ENCODE measurements at regions of chr7 and their contacts with region 1.

Region 1: GRCh38 chr7:38908759-38909335 is at the start of gene VPS41:
- DNase-seq: peak; percentile 58 to 83
- ATAC-seq: peak; percentile 84 to 98 (median 97)
- H3K4me3 ChIP-seq: peak within 1 kb of the TSS; percentile 75 to 96 (median 85)
- H3K27ac ChIP-seq: peak within 1 kb of the TSS in 5 of 10 donors; percentile 29 to 86 (median 47)
- H3K4me1 ChIP-seq: peaks cover 0 to 19% (median 9%) of the 10 kb centered on the region in 9 donors
- H3K27me3 ChIP-seq: no peaks in the 10 kb centered on the region
- CTCF ChIP-seq: no peak
- total RNA-seq, gene VPS41: 27.4 to 60.7 (median 50.5) TPM

Region 2: GRCh38 chr7:38806912-38807311 is 101.9 kb before region 1 on chr7:
- intact Hi-C with region 1: loop called in 2 of 10 experiments (anchors 5 to 10 kb)
- DNase-seq: no peak
- ATAC-seq: no peak
- H3K4me3 ChIP-seq: no peak overlapping the region
- H3K27ac ChIP-seq: no peak overlapping the region
- H3K4me1 ChIP-seq: no peaks in the 10 kb centered on the region
- H3K27me3 ChIP-seq: no peaks in the 10 kb centered on the region
- CTCF ChIP-seq: no peak

Region 3: DNA sequence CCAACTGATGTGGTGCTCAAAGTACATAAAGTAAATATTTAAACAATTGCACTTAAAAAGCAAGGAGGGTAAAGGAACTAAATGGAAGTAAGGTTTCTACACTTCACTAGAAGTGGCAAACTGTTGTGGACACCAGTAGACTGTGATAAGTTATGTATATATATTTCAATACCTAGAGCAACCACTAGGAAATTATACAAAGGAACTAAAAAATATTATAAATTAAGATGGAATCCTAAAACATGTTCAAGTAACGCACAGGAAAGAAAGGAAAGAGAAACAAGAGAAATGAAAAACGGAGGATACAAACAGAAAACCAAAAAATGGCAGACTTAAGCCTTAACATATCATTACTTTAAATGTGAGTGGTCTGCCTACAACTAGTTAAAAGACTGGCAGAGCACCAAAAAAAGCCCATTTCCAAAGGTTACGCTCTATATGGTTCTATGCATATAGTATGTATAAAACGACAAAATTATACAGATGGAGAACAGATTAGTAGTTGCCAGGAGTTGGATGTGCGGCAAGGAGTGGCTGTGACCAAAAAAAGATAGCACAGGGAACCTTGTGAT is 18.9 kb before region 1 on chr7:
- intact Hi-C with region 1: no loop called
- DNase-seq: no peak
- ATAC-seq: no peak
- H3K4me3 ChIP-seq: no peak overlapping the region
- H3K27ac ChIP-seq: no peak overlapping the region
- H3K4me1 ChIP-seq: no peaks in the 10 kb centered on the region
- H3K27me3 ChIP-seq: no peaks in the 10 kb centered on the region
- CTCF ChIP-seq: peak in 2 of 9 donors; percentile 7 to 44

Measured in heart right ventricle (tissue), 16 donors.